ENCODE measurements at regions of chr12 and their contacts with region 1.

Region 1: DNA sequence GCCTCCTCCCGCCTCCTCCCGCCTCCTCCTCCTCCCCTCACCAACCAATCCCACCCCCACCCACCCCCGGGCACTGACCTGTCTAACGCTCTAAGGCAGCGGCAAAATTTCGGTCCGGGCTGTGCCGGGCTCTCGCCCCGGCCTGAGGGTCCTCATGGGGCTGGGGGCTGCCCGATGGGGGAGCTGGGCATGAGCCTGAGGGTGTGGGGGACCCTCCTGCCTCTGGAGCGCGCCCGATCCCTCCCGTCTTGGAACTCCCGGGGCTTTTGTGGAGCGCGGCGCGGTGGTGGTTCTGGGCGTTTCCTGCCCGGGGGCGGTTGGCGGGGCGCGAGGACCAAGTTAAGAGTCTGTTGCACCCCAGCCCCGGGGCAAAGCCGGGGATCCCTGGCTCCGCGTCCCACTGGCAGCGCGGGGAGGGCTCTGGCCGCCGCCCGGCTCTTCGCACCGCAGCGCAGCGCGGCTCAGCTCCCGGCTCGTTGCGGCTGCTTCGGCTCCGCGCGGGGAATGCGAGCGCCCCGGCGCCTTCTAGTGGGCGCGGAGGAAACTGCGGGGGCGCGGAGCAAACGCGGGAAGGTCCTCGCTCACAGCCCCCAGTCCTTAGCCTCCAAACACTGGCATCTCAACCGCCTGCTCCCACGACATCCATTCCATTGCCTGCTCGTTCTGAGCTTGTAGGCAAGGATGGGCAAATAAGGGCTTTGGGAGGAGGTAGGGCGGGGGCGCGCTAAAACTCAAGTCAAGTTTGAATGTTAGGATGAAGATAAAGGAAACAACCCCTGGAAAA is at the start of gene B4GALNT1:
- DNase-seq: peak; percentile 91
- H3K4me3 ChIP-seq: peak within 1 kb of the TSS; percentile 55 to 85
- H3K27ac ChIP-seq: peak within 1 kb of the TSS in 1 of 2 experiments; percentile 11; a peak in 1 of 4 replicates
- H3K4me1 ChIP-seq: peaks cover 0 to 2% of the 10 kb centered on the region in 2 experiments; a peak in 1 of 4 replicates
- H3K27me3 ChIP-seq: no peaks in the 10 kb centered on the region; the same call in 1 of the 2 replicates
- CTCF ChIP-seq: peak; percentile 77
- EP300 ChIP-seq: no peak
- RAD21 ChIP-seq: peak; percentile 54
- polyA plus RNA-seq, gene B4GALNT1: 5.2 and 5.3 TPM in 2 replicates

Region 2: DNA sequence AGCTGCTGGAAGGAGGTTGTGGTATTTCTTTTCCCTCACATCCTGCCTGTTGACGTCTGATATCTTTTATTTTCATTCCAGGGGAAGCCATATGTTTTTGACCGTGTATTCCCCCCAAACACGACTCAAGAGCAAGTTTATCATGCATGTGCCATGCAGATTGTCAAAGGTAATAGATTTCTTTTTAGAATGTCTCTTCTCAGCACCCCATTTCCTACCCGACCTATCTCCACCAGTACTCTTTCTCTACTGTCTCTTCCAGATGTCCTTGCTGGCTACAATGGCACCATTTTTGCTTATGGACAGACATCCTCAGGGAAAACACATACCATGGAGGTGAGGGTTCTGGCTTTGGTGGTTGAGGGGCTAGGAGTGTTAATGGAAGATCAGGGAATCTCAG is 69.5 kb before region 1 on chr12:
- CTCF ChIA-PET with region 1: interaction called, 14 read pairs
- POLR2A ChIA-PET with region 1: no interaction called
- DNase-seq: no peak
- H3K4me3 ChIP-seq: no peak overlapping the region
- H3K27ac ChIP-seq: no peak overlapping the region
- H3K4me1 ChIP-seq: 0 out of 4 replicates have a peak, but pooled peaks cover 0 to 4% of the 10 kb centered on the region in 2 experiments
- H3K27me3 ChIP-seq: no peaks in the 10 kb centered on the region
- CTCF ChIP-seq: no peak
- EP300 ChIP-seq: no peak
- RAD21 ChIP-seq: no peak

Region 3: DNA sequence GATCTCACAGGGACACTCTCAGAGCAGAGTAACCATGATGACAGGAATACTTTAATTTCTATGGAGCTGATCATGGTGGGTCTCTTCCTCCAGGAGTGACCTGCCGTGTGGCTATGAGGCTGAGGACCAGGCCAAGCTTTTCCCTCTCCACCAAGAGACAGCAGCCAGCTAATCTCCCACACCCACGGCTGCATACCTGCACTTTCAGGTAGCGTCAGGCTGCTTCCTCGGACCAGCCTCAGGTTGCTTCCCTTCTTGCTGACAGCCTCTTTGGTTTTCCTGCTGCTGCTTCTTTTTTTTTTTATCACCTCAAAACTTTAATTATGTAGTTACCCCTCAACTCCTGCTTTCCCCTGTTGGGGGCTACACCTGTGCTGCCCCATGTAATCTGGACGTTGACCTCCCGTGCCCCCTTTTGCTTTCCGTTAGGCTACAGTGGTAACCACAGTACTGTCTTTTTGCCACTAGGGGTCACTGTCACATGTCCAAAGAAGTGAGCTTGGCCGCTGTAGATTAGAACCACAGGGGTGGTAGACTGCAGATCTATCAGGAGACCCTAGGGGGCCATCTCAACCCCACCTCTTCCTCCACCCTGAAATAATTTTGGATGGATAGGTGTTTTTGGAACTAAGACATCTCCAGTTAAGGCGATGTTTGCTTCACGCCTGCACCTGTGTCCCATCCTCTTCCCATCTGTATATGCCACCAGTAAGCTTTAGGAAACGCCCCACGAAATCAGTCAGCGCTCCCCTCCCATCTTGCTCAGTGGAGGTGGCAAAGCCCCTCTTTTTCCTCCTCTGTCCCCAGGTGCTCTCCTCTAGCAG is 49.7 kb before region 1 on chr12:
- CTCF ChIA-PET with region 1: interaction called, 298 read pairs
- POLR2A ChIA-PET with region 1: no interaction called
- DNase-seq: peak; percentile 92
- H3K4me3 ChIP-seq: no peak overlapping the region; a peak in 1 of 4 replicates
- H3K27ac ChIP-seq: no peak overlapping the region
- H3K4me1 ChIP-seq: no peaks in the 10 kb centered on the region
- H3K27me3 ChIP-seq: no peaks in the 10 kb centered on the region
- CTCF ChIP-seq: peak; percentile 98
- EP300 ChIP-seq: no peak
- RAD21 ChIP-seq: peak; percentile 97

Region 4: GRCh38 chr12:57604454-57604991 is 28.4 kb before region 1 on chr12 and contains the start of gene DTX3:
- CTCF ChIA-PET with region 1: interaction called, 14 read pairs
- POLR2A ChIA-PET with region 1: no interaction called
- DNase-seq: peak; percentile 84
- H3K4me3 ChIP-seq: peak within 1 kb of the TSS; percentile 86 to 91
- H3K27ac ChIP-seq: peak within 1 kb of the TSS; percentile 61 to 97
- H3K4me1 ChIP-seq: peaks cover 9 to 17% of the 10 kb centered on the region in 2 experiments; a peak in 3 of 4 replicates
- H3K27me3 ChIP-seq: no peaks in the 10 kb centered on the region
- CTCF ChIP-seq: no peak
- EP300 ChIP-seq: no peak
- RAD21 ChIP-seq: no peak
- polyA plus RNA-seq, gene DTX3: 61.2 and 62.6 TPM in 2 replicates

Region 5: GRCh38 chr12:57621497-57622292 is 11.2 kb before region 1 on chr12:
- CTCF ChIA-PET with region 1: interaction called, 80 read pairs
- POLR2A ChIA-PET with region 1: no interaction called
- DNase-seq: peak; percentile 96
- H3K4me3 ChIP-seq: peak overlapping the region in 1 of 2 experiments; percentile 41; a peak in 1 of 4 replicates
- H3K27ac ChIP-seq: no peak overlapping the region
- H3K4me1 ChIP-seq: peaks cover 0 to 7% of the 10 kb centered on the region in 2 experiments; a peak in 1 of 4 replicates
- H3K27me3 ChIP-seq: no peaks in the 10 kb centered on the region
- CTCF ChIP-seq: peak; percentile 88
- EP300 ChIP-seq: no peak
- RAD21 ChIP-seq: peak; percentile 76

Region 6: GRCh38 chr12:57693659-57694458 is 61.0 kb after region 1 on chr12 and contains the start of gene OS9:
- CTCF ChIA-PET with region 1: interaction called, 24 read pairs
- POLR2A ChIA-PET with region 1: interaction called, 3 read pairs
- DNase-seq: peak; percentile 90
- H3K4me3 ChIP-seq: peak within 1 kb of the TSS; percentile 90
- H3K27ac ChIP-seq: peak within 1 kb of the TSS in 1 of 2 experiments; percentile 59; a peak in 2 of 4 replicates
- H3K4me1 ChIP-seq: peaks cover 0 to 7% of the 10 kb centered on the region in 2 experiments; a peak in 2 of 4 replicates
- H3K27me3 ChIP-seq: no peaks in the 10 kb centered on the region
- CTCF ChIP-seq: peak; percentile 71
- EP300 ChIP-seq: no peak
- RAD21 ChIP-seq: peak; percentile 56
- polyA plus RNA-seq, gene OS9: 280 and 362 TPM in 2 replicates

Region 7: GRCh38 chr12:57735952-57736740 is 103.3 kb after region 1 on chr12:
- CTCF ChIA-PET with region 1: interaction called, 17 read pairs
- POLR2A ChIA-PET with region 1: no interaction called
- DNase-seq: peak; percentile 87
- H3K4me3 ChIP-seq: peak overlapping the region; percentile 29 to 32; a peak in 3 of 4 replicates
- H3K27ac ChIP-seq: peak overlapping the region in 1 of 2 experiments; percentile 39; a peak in 1 of 4 replicates
- H3K4me1 ChIP-seq: peaks cover 0 to 29% of the 10 kb centered on the region in 2 experiments; a peak in 2 of 4 replicates
- H3K27me3 ChIP-seq: no peaks in the 10 kb centered on the region
- CTCF ChIP-seq: peak; percentile 53
- EP300 ChIP-seq: no peak
- RAD21 ChIP-seq: peak; percentile 69

Measured in SK-N-SH (cell line).